ENCODE measurements at regions of chr11 and their contacts with region 1.

Region 1: GRCh38 chr11:73469401-73469800 is 93.2 kb downstream of the RELT start:
- DNase-seq: no peak
- H3K4me3 ChIP-seq: no peak overlapping the region
- H3K27ac ChIP-seq: no peak overlapping the region
- H3K4me1 ChIP-seq: no peaks in the 10 kb centered on the region
- H3K27me3 ChIP-seq: no peaks in the 10 kb centered on the region
- CTCF ChIP-seq: no peak

Region 2: DNA sequence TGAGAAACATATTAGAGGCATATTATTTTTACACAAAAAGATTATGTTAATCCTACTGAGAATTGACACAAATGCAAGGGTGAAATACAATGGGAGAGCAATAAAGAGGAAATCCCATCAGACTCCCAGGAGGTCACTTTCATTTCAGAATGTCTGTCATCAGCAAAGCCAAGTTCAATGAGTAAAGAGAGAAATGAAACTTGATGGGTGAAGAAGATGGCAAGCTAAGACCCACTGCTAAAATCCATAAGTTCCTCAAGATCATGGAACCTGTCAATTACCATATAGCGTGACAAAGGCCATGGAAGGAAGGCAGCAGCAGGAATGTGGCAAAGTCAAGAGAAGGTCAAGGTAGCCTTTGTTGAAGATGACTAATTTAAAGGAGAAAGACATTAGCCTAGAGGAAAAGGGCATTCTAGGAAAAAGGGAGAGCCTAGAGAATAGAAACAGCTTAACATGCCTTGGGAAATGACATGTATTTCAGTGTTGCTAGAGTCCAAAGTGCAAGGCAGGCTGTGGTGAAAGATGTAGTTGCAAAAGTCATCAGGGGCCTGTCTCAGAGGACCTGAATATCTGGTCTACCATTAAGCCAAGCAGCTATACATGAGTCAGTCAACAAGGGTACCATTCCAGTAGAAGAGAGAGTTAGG is 85.4 kb after region 1 on chr11:
- CTCF ChIA-PET with region 1: no interaction called
- POLR2A ChIA-PET with region 1: interaction called, 14 read pairs
- intact Hi-C with region 1: no loop called
- DNase-seq: no peak
- H3K4me3 ChIP-seq: no peak overlapping the region
- H3K27ac ChIP-seq: no peak overlapping the region
- H3K4me1 ChIP-seq: peaks cover 32% of the 10 kb centered on the region
- H3K27me3 ChIP-seq: no peaks in the 10 kb centered on the region
- CTCF ChIP-seq: no peak

Region 3: GRCh38 chr11:73680687-73681086 is 211.3 kb after region 1 on chr11:
- CTCF ChIA-PET with region 1: no interaction called
- POLR2A ChIA-PET with region 1: interaction called, 15 read pairs
- intact Hi-C with region 1: no loop called
- DNase-seq: no peak
- H3K4me3 ChIP-seq: no peak overlapping the region
- H3K27ac ChIP-seq: no peak overlapping the region
- H3K4me1 ChIP-seq: no peaks in the 10 kb centered on the region
- H3K27me3 ChIP-seq: no peaks in the 10 kb centered on the region
- CTCF ChIP-seq: no peak

Measured in A673 (cell line).